Posterior vena cava (tissue), 2 donors: ENCODE measurements at regions of chr10 and their contacts with region 1.

Region 1: DNA sequence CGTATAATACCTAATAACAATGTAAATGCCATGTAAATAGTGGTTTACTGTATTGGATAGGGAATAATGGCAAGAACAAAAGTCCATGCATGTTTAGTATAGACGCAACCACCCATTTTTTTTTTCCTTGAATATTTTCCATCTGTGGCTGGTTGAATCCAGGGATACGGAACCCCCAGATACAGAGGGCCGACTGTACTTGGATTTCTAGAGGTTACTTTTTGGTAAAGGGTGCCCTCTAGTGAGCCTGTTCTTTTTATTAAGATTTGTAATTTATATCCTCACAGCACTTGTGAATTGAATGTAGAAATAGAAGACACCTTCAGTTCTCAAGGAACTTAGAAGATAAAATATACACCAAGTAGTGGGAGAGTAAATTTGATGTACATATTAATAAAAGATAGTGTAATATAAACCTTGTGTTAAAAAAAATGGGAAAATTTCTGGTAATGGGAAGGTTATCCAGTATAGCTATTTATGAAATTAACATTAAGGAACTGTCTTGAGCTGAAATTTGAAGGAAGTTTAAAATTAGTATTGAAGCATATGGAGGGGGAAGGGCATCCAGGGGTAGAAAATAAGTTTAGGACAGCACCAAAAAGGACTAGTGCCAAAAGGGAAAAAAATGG is 32.0 kb downstream of the EXOC6 start:
- DNase-seq: no peak

Region 2: GRCh38 chr10:92470041-92470440 is 410.3 kb before region 1 on chr10:
- intact Hi-C with region 1: no loop called
- DNase-seq: no peak

Region 3: GRCh38 chr10:92839191-92840085 is 40.9 kb before region 1 on chr10:
- intact Hi-C with region 1: loop called in 1 of 2 experiments (anchors 5 kb)
- DNase-seq: peak; percentile 88

Region 4: GRCh38 chr10:92850185-92850584 is 30.2 kb before region 1 on chr10:
- intact Hi-C with region 1: no loop called
- DNase-seq: no peak

Region 5: GRCh38 chr10:93039721-93040120 is 159.4 kb after region 1 on chr10:
- intact Hi-C with region 1: loop called in 1 of 2 experiments (anchors 10 kb)
- DNase-seq: no peak